ENCODE measurements at regions of chr4 and their contacts with region 1.

Region 1: DNA sequence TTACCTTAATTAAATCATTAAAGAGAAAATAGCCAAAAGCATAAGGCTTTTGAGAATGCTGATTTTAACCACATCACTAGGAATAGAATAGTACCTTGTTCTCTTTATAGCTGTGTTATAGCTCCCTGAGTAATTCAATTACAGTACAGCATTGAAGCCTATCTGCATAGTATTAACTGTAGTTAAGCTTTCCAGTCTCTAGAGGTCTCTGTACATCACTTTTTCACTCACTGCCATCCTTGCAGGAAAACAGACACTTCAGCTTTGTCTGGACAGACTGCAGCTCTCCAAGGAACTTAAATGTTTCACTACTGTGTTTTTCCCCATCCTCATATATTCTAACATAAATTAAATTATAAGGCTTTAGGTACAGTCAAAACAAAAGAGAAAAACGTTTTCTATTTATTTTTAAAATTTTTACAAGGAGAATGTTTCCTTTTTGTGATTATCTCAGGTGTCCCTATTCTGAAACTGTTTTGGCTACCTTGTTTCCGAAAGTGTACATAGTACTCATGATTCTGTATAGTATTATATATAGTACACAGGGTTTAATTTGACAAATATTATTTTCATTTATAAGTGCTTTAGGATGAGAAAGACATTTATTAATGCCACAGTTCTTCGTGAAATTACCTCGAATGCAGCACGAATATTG is 407.9 kb downstream of the PCDH18 start:
- DNase-seq: peak; percentile 42
- H3K4me3 ChIP-seq: no peak overlapping the region
- H3K27ac ChIP-seq: no peak overlapping the region; a peak in 1 of 4 replicates
- H3K4me1 ChIP-seq: peaks cover 0 to 9% of the 10 kb centered on the region in 2 experiments; a peak in 2 of 4 replicates
- H3K27me3 ChIP-seq: no peaks in the 10 kb centered on the region
- CTCF ChIP-seq: peak; percentile 80
- EP300 ChIP-seq: no peak
- RAD21 ChIP-seq: peak; percentile 96

Region 2: DNA sequence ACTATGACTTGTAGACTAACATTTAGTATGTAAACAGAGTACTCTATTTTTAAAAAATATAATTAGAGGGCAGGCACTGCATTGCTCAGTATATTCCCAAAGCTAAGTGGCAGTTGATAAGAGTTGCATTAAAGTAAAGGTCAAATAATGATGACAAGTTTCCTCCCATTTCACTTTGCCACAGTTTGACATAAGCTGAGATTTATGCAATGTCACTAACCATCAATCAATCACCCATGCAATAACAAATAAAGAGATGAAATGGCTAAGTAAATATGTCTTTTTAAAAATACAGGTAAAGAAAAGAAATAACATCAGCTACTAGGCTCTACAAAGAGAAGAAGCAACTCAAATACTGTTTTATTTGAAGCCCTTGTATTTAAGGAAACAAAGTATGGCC is 265.5 kb before region 1 on chr4:
- CTCF ChIA-PET with region 1: no interaction called
- POLR2A ChIA-PET with region 1: no interaction called
- DNase-seq: no peak
- H3K4me3 ChIP-seq: no peak overlapping the region
- H3K27ac ChIP-seq: no peak overlapping the region
- H3K4me1 ChIP-seq: peaks cover 0 to 1% of the 10 kb centered on the region in 2 experiments; a peak in 2 of 4 replicates
- H3K27me3 ChIP-seq: no peaks in the 10 kb centered on the region
- CTCF ChIP-seq: no peak
- EP300 ChIP-seq: no peak
- RAD21 ChIP-seq: no peak

Region 3: DNA sequence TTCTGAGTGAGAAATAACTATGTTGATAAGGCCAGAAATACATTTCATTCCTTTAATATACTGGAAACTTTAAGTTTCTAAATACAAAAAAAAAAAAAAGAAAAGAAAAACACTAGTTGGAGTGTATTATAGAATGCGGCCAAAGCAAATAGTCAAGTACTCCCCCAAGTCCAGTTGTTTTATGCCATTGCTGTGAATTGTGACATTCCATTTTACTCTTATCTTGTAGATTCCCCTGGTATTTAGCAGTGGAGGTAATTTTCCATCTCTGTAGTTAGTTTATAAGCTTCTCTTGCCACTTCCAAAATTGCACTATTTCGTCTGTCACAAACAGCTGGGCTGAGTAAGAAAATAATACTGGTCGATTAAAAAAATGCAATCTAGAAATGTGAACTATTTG is 18.1 kb before region 1 on chr4:
- CTCF ChIA-PET with region 1: no interaction called
- POLR2A ChIA-PET with region 1: no interaction called
- DNase-seq: no peak
- H3K4me3 ChIP-seq: no peak overlapping the region
- H3K27ac ChIP-seq: no peak overlapping the region
- H3K4me1 ChIP-seq: no peaks in the 10 kb centered on the region
- H3K27me3 ChIP-seq: no peaks in the 10 kb centered on the region
- CTCF ChIP-seq: no peak
- EP300 ChIP-seq: no peak
- RAD21 ChIP-seq: no peak

Region 4: DNA sequence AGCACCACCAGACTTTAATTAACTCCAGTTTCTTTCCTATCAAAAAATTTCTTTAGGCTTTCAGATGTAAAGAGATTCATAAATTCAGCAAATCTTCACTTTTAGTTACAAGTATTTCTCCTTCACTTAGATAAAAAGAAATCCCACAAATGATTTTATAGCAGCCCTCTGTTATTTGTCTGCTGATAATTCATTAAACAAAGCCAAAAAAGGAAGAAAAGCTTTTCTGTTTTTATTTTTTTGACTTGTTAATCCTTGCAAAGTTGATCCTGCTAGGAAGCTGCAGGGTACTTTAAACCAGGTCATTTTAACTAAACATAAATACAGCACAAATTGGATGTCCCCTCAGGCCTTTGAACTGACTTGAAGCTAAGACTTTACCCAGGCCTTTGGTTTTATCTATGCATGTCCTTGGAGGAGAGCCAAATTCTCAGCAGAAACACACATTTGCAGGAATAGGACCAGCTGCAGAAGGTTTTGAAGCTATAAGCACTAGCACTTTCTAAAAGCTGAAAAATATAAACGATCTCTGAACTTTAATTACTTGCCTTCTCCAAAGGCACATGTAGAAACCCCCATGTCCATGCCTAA is 350.4 kb after region 1 on chr4:
- CTCF ChIA-PET with region 1: interaction called, 12 read pairs
- POLR2A ChIA-PET with region 1: no interaction called
- DNase-seq: peak; percentile 62
- H3K4me3 ChIP-seq: no peak overlapping the region
- H3K27ac ChIP-seq: peak overlapping the region in 1 of 2 experiments; percentile 98; a peak in 2 of 4 replicates
- H3K4me1 ChIP-seq: peaks cover 4 to 21% of the 10 kb centered on the region in 2 experiments; a peak in 3 of 4 replicates
- H3K27me3 ChIP-seq: no peaks in the 10 kb centered on the region
- CTCF ChIP-seq: no peak
- EP300 ChIP-seq: peak in 1 of 2 experiments; percentile 97; a peak in 2 of 4 replicates
- RAD21 ChIP-seq: peak; percentile 40

Region 5: DNA sequence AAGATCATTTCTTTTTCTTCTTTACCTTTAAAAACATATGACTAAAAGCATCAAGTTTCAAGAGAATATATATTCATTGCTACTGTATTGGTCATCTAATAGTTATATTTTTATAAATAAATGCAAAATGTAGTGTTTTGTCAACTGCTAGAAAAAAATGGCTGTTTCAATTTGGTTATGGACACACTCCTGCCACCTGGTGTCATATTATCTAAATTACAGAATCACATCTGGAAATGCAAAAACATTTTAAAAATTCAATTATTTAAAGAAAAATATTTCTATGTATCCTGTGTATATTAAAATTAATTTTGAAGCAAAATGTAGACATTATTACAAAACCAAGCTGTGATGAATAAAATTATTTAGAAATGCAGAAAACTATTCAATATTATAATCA is 737.3 kb after region 1 on chr4:
- CTCF ChIA-PET with region 1: interaction called, 17 read pairs
- POLR2A ChIA-PET with region 1: no interaction called
- DNase-seq: peak; percentile 20
- H3K4me3 ChIP-seq: no peak overlapping the region
- H3K27ac ChIP-seq: no peak overlapping the region
- H3K4me1 ChIP-seq: no peaks in the 10 kb centered on the region; a peak in 1 of 4 replicates
- H3K27me3 ChIP-seq: no peaks in the 10 kb centered on the region
- CTCF ChIP-seq: peak; percentile 59
- EP300 ChIP-seq: no peak
- RAD21 ChIP-seq: peak; percentile 74

Measured in SK-N-SH (cell line).